ENCODE measurements at regions of chr14 and their contacts with region 1.

Region 1: GRCh38 chr14:64899958-64900357 is 14.3 kb upstream of the CHURC1 start:
- DNase-seq: no peak
- ATAC-seq: no peak
- H3K4me3 ChIP-seq: no peak overlapping the region
- H3K27ac ChIP-seq: no peak overlapping the region
- H3K4me1 ChIP-seq: no peaks in the 10 kb centered on the region
- H3K27me3 ChIP-seq: no peaks in the 10 kb centered on the region

Region 2: DNA sequence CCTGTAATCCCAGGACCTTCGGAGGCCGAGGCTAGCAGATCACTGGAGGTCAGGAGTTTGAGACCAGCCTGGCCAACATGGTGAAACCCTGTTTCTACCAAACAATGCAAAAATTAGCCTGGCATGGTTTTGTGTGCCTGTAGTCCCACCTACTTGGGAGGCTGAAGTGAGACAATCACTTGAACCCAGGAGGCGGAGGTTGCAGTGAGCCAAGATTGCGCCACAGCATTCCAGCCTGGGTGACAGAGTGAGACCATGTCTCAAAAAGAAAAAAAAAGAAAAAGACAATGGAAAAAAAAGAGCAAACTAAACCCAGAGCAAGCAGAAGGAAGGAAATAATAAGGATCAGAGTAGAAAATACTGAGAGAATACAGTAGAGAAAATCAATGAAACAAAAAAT is 19.7 kb after region 1 on chr14:
- intact Hi-C with region 1: no loop called
- DNase-seq: peak in 1 of 2 donors; percentile 65
- ATAC-seq: no peak
- H3K4me3 ChIP-seq: no peak overlapping the region
- H3K27ac ChIP-seq: peak overlapping the region in 1 of 2 donors; percentile 92
- H3K4me1 ChIP-seq: peaks cover 6 to 7% of the 10 kb centered on the region in 2 donors
- H3K27me3 ChIP-seq: no peaks in the 10 kb centered on the region

Region 3: DNA sequence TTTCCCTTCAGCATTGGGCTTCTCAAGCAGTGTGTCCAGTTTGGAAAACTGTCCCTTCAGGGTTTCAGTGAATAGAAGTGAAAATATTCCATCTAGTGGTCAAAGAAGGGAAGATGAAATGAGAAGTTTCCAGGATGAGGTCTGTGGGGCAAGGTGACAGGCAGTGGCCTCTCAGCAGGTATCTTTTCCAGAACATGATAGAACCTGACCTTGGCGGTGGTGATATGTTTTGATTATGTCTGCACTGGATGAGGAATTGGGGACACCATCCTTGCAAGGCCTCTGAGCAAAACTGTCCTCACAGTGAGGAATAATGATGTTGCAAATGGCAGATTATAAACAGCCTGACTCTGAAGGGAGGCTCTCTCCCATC is 37.8 kb after region 1 on chr14:
- intact Hi-C with region 1: loop called in 1 of 2 experiments (anchors 5 kb)
- DNase-seq: no peak
- ATAC-seq: no peak
- H3K4me3 ChIP-seq: no peak overlapping the region
- H3K27ac ChIP-seq: no peak overlapping the region
- H3K4me1 ChIP-seq: peaks cover 0 to 5% of the 10 kb centered on the region in 2 donors
- H3K27me3 ChIP-seq: no peaks in the 10 kb centered on the region

Region 4: DNA sequence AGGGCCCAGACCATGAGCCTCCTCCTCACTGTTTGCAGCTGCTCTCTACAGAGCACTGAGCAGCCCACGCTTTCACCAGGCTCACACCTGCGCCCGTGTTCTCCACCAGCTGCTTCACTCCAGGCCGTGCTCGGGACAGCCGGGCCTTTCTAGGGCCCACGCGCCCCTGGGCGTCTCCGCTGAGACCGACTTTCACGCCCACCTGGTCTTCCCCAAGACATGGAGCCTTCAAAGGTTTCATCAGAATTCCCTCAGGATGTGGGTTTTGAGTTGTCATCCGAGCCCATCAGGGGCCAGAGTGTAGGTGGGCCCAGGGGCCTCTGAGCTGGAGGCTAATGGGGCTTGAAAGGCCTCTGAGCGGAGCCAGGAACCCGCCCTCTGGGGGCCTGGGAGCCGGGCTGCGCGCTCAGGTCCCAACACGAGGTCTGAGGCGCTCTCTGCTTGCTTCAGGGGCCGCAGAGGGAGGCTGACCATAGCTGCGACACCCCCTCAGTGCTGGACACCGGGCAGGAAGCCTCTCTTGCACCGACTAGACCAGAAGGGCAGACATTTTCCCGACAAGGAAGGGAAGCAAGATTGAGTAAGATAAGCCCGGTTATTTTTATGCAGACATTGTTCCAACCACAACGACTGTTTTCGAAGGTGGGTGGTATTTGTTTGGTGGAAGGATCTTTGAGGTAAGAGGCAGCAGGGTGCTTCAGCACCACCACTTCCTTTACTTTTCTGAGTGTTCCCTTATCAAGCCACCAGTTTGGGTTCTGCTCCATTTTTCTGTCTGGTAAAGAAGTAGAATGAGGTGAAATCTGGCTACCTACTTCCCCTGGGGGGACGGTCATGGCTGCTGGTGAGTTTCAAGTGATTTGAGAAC is 387.5 kb after region 1 on chr14:
- intact Hi-C with region 1: no loop called
- DNase-seq: no peak
- ATAC-seq: no peak
- H3K4me3 ChIP-seq: no peak overlapping the region
- H3K27ac ChIP-seq: no peak overlapping the region
- H3K4me1 ChIP-seq: no peaks in the 10 kb centered on the region
- H3K27me3 ChIP-seq: no peaks in the 10 kb centered on the region

Measured in aorta (tissue), 5 donors.